Activated CD4-positive, alpha-beta memory T cell treated with anti-CD3 and anti-CD28 coated beads, Interleukin-2, amount 10 ng/mL, durations not matched to agents 7 days and 5 days (primary cell): ENCODE measurements at regions of chr2 and their contacts with region 1.

Region 1: DNA sequence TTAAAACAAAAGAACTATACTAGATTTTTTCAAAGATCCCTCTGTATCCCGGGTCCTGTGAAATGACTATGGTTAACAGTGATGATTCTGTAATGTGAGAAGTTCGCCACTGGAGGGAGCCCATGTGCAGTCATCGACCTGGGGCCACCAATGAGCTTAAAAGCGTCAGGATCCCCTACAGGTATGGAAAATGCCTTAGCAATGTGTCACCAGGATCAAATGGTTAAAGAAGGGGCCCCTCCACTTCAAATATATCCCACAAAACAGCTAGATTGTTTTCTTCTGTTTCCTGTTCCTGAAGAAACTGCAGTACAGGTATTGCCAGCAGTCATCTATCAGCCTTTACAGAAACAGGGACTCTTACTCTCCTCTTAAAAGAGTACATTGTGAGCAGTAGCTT is 15.3 kb downstream of the CHRNA1 start:
- DNase-seq: peak; percentile 75
- H3K4me3 Mint-ChIP-seq: no peak overlapping the region
- H3K27ac Mint-ChIP-seq: no peak overlapping the region
- H3K4me1 Mint-ChIP-seq: peaks cover 42% of the 10 kb centered on the region
- H3K27me3 Mint-ChIP-seq: peaks cover 20% of the 10 kb centered on the region

Region 2: GRCh38 chr2:174729797-174730697 is 18.9 kb before region 1 on chr2:
- CTCF ChIA-PET with region 1: interaction called, 16 read pairs
- POLR2A ChIA-PET with region 1: no interaction called
- DNase-seq: peak; percentile 44
- H3K4me3 Mint-ChIP-seq: peak overlapping the region; percentile 73
- H3K27ac Mint-ChIP-seq: no peak overlapping the region
- H3K4me1 Mint-ChIP-seq: peaks cover 21% of the 10 kb centered on the region
- H3K27me3 Mint-ChIP-seq: peaks cover 43% of the 10 kb centered on the region

Region 3: GRCh38 chr2:174738841-174739240 is 10.1 kb before region 1 on chr2:
- CTCF ChIA-PET with region 1: interaction called, 12 read pairs
- POLR2A ChIA-PET with region 1: no interaction called
- DNase-seq: no peak
- H3K4me3 Mint-ChIP-seq: no peak overlapping the region
- H3K27ac Mint-ChIP-seq: no peak overlapping the region
- H3K4me1 Mint-ChIP-seq: no peaks in the 10 kb centered on the region
- H3K27me3 Mint-ChIP-seq: peaks cover 25% of the 10 kb centered on the region

Region 4: GRCh38 chr2:174764280-174765255 is 15.6 kb after region 1 on chr2 and contains the start of gene CHRNA1:
- CTCF ChIA-PET with region 1: interaction called, 18 read pairs
- POLR2A ChIA-PET with region 1: no interaction called
- DNase-seq: no peak
- H3K4me3 Mint-ChIP-seq: no peak within 1 kb of the TSS
- H3K27ac Mint-ChIP-seq: no peak within 1 kb of the TSS
- H3K4me1 Mint-ChIP-seq: peaks cover 4% of the 10 kb centered on the region
- H3K27me3 Mint-ChIP-seq: peaks cover 8% of the 10 kb centered on the region
- total RNA-seq, gene CHRNA1: not detected

Region 5: DNA sequence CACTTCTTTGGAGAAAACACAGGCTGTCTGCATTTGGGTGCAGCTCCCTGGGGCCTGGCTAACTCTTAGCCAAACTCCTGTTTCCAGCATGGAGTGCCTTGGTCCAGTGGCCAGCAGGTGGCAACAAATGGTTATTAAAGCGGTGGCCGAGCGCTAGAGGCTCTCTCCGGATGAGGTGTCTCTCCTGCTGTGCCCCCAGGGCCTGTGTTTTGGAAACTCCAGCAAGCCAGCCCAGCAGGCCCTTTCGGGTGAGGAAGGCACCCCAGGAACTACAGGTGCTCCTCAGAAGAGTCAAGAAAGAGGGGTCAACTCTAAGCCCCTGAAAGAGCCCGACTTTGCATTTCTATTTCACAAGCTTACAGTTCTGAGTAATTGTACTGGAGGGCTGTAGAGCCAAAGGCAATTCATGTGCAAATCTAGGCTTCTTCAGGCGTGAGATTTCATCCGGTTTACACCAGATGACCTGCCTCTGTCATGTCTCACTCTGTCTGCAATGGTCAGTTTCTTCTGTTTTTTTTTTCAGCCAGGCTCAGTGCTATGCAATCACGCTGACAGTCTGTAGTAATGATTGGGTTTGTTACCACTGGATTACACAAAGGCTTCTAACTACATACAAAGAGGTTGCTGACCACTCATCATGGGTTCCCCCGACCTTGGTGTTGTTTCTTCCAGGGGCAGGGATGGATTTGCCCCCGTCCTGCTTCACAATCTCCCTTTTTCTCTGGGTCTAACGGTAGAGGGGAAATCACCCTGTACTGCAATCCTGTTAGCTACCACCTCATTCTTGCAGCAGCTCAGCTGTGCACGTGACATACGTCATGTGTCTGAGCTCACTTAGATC is 22.9 kb after region 1 on chr2:
- CTCF ChIA-PET with region 1: interaction called, 37 read pairs
- POLR2A ChIA-PET with region 1: interaction called, 3 read pairs
- DNase-seq: peak; percentile 45
- H3K4me3 Mint-ChIP-seq: no peak overlapping the region
- H3K27ac Mint-ChIP-seq: no peak overlapping the region
- H3K4me1 Mint-ChIP-seq: peaks cover 14% of the 10 kb centered on the region
- H3K27me3 Mint-ChIP-seq: no peaks in the 10 kb centered on the region

Region 6: DNA sequence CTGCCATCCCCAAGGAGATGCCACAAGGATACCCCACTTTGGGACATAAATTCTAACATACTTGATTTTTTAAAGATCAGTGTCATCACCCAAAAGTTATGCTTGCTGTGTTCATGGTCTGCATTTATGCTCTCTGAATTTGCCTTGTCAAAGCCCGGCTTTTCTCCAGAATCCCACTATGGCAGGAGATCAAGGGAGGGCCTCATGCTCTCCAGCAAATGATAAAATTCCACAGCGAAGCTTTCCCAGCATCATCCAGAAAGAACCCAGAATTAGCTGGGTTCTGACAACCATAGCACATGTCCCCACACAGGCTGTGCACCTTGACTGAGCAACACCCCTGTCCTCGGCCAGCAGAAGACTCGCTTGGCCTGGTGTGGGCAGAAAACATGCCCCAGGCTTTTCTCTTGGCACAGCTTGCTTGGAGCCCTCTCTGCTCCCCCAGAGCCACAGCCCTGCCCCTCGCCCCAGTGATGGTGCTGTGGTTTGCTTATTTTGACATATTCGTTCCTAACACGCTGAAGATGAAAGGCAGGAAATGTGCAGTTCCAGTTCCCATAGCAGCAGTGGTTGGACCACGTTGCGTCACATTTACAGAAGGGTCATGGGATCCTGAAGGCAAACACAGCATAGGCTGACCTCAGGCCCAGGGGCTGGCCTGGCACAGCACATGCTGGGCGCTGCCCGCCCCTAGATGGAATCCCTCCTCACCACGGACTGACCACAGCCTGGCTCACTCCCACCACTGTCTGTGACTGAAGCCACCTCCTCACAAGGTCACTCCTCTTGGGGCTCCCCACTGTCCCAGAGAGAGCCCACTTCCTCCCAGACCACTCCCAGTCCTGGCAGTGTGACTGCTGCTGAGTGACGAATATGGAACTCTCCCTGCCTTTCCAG is 29.4 kb after region 1 on chr2:
- CTCF ChIA-PET with region 1: interaction called, 37 read pairs
- POLR2A ChIA-PET with region 1: interaction called, 3 read pairs
- DNase-seq: peak; percentile 80
- H3K4me3 Mint-ChIP-seq: peak overlapping the region; percentile 5
- H3K27ac Mint-ChIP-seq: peak overlapping the region; percentile 27
- H3K4me1 Mint-ChIP-seq: peaks cover 36% of the 10 kb centered on the region
- H3K27me3 Mint-ChIP-seq: no peaks in the 10 kb centered on the region

Region 7: DNA sequence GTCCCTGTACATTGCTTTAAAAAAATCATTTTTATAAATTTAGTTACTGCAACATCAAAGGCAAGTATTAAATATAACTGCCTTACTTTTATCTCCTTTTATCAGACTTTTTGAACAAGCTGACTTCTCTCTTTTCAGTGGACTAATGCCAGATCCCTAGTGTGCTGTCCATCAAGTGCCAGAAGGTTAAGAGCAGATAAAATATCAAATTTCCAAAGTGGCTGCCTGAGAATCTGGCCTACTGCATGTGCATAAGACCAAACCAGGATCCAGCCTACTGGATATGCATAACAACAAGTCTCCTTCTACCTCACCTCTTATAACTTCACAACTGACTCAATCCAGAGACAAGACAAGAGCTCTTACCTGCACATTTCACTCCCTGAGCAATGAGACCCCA is 75.1 kb after region 1 on chr2:
- CTCF ChIA-PET with region 1: no interaction called
- POLR2A ChIA-PET with region 1: no interaction called
- DNase-seq: no peak
- H3K4me3 Mint-ChIP-seq: no peak overlapping the region
- H3K27ac Mint-ChIP-seq: no peak overlapping the region
- H3K4me1 Mint-ChIP-seq: no peaks in the 10 kb centered on the region
- H3K27me3 Mint-ChIP-seq: no peaks in the 10 kb centered on the region

Region 8: GRCh38 chr2:174985630-174986029 is 236.7 kb after region 1 on chr2:
- CTCF ChIA-PET with region 1: interaction called, 15 read pairs
- POLR2A ChIA-PET with region 1: no interaction called
- DNase-seq: no peak
- H3K4me3 Mint-ChIP-seq: no peak overlapping the region
- H3K27ac Mint-ChIP-seq: no peak overlapping the region
- H3K4me1 Mint-ChIP-seq: peaks cover 2% of the 10 kb centered on the region
- H3K27me3 Mint-ChIP-seq: peaks cover 4% of the 10 kb centered on the region